Activated CD4-positive, alpha-beta T cell treated with anti-CD3 and anti-CD28 coated beads, Interleukin-2, amount 10 ng/mL, durations not matched to agents 24 days and 14 days (primary cell): ENCODE measurements at regions of chr15 and their contacts with region 1.

Region 1: DNA sequence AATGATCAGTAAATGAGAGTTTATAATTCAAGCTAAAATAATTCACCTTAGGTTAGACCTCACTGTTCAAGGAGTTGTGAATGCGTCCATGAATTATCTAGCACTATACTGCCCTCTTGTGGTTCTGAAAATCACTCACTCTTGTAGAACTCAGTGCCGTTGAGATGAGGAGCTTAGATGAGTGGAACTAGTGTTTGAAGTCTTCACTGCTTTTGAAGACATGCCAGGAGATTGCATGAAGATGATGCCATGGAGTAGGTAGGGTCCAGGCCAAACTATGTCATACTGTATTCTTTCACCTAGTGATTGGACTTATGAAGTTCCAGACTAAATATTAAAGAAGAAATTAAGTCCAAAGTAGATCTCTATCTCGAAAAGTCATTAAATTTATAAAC is 28.8 kb downstream of the LYSMD4 start:
- DNase-seq: peak; percentile 89
- H3K4me3 Mint-ChIP-seq: no peak overlapping the region
- H3K27ac Mint-ChIP-seq: no peak overlapping the region
- H3K4me1 Mint-ChIP-seq: peaks cover 39% of the 10 kb centered on the region
- H3K27me3 Mint-ChIP-seq: no peaks in the 10 kb centered on the region

Region 2: DNA sequence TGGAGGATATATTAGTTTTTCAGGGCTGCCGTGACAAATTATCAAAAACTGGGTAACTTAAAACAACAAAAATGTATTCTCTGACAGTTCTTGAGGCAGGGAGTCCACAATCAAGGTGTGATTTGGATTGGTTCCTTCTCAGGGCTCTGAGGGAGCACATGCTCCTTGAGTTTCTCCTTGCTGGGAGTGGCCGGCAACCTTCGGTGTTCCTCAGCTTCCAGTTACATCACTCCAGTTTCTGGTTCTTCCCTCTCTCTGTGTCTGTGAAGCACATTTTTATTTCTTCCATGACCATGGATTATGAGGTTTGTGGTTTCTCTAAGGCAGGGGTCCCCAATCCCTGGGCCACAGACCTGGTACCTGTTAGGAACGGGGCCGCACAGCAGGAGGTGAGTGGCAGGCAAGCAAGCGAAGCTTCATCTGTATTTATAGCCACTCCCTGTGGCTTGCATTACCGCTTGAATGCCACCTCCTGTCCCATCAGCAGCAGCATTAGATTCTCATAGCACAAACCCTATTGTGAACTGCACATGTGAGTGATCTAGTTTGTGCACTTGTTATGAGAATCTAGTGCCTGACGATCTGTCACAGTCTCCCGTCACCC is 428.8 kb before region 1 on chr15:
- intact Hi-C with region 1: loop called (anchors 1 kb)
- DNase-seq: peak; percentile 51
- H3K4me3 Mint-ChIP-seq: no peak overlapping the region
- H3K27ac Mint-ChIP-seq: no peak overlapping the region
- H3K4me1 Mint-ChIP-seq: peaks cover 25% of the 10 kb centered on the region
- H3K27me3 Mint-ChIP-seq: no peaks in the 10 kb centered on the region

Region 3: GRCh38 chr15:99343881-99344551 is 360.4 kb before region 1 on chr15:
- intact Hi-C with region 1: loop called (anchors 1 kb)
- DNase-seq: peak; percentile 78
- H3K4me3 Mint-ChIP-seq: no peak overlapping the region
- H3K27ac Mint-ChIP-seq: peak overlapping the region; percentile 34
- H3K4me1 Mint-ChIP-seq: peaks cover 6% of the 10 kb centered on the region
- H3K27me3 Mint-ChIP-seq: no peaks in the 10 kb centered on the region

Region 4: GRCh38 chr15:99442252-99442897 is 262.1 kb before region 1 on chr15:
- intact Hi-C with region 1: loop called (anchors 5 kb)
- DNase-seq: no peak
- H3K4me3 Mint-ChIP-seq: peak overlapping the region; percentile 5
- H3K27ac Mint-ChIP-seq: peak overlapping the region; percentile 69
- H3K4me1 Mint-ChIP-seq: peaks cover 32% of the 10 kb centered on the region
- H3K27me3 Mint-ChIP-seq: peaks cover 2% of the 10 kb centered on the region

Region 5: GRCh38 chr15:99651023-99651807 is 53.2 kb before region 1 on chr15:
- intact Hi-C with region 1: no loop called
- DNase-seq: no peak
- H3K4me3 Mint-ChIP-seq: no peak overlapping the region
- H3K27ac Mint-ChIP-seq: peak overlapping the region; percentile 47
- H3K4me1 Mint-ChIP-seq: peaks cover 10% of the 10 kb centered on the region
- H3K27me3 Mint-ChIP-seq: no peaks in the 10 kb centered on the region

Region 6: GRCh38 chr15:99755692-99756409 is 51.4 kb after region 1 on chr15:
- intact Hi-C with region 1: loop called (anchors 1 kb)
- DNase-seq: peak; percentile 83
- H3K4me3 Mint-ChIP-seq: no peak overlapping the region
- H3K27ac Mint-ChIP-seq: no peak overlapping the region
- H3K4me1 Mint-ChIP-seq: peaks cover 5% of the 10 kb centered on the region
- H3K27me3 Mint-ChIP-seq: peaks cover 4% of the 10 kb centered on the region